Spleen (tissue), 13 donors: ENCODE measurements at regions of chr3 and their contacts with region 1.

Region 1: DNA sequence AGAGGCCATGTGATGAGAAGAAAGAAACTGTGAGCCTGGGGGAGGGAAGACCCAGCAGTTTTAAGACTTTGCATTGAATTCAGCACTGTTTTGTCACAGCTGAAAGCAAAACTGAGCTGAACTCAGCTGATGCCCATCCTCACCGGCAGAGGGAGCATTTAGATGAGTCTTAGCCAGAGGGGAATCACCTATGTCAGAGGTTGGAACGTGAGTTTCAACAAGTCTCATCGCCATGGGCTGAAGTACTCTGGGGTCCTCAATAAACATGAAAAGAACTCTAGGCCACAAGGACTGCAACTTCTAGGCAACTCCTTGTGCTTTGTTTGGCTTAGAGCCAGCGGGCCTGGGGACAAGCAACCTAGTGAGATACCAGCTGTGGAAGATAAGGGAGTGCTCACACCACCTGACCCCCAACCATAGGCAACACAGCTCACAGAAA is 324.5 kb downstream of the TBL1XR1 start:
- DNase-seq: no peak
- H3K4me3 ChIP-seq: no peak overlapping the region
- H3K27ac ChIP-seq: no peak overlapping the region
- H3K4me1 ChIP-seq: peaks cover 0 to 9% (median 6%) of the 10 kb centered on the region in 6 donors
- H3K27me3 ChIP-seq: peaks cover 0 to 2% (median 0%) of the 10 kb centered on the region in 7 donors
- CTCF ChIP-seq: peak; percentile 53 to 82 (median 73)
- POLR2A ChIP-seq: no peak

Region 2: GRCh38 chr3:176941689-176942088 is 68.9 kb after region 1 on chr3:
- intact Hi-C with region 1: loop called (anchors 5 kb)
- DNase-seq: no peak
- H3K4me3 ChIP-seq: no peak overlapping the region
- H3K27ac ChIP-seq: no peak overlapping the region
- H3K4me1 ChIP-seq: peaks cover 0 to 16% (median 0%) of the 10 kb centered on the region in 6 donors
- H3K27me3 ChIP-seq: no peaks in the 10 kb centered on the region
- CTCF ChIP-seq: no peak
- POLR2A ChIP-seq: no peak

Region 3: DNA sequence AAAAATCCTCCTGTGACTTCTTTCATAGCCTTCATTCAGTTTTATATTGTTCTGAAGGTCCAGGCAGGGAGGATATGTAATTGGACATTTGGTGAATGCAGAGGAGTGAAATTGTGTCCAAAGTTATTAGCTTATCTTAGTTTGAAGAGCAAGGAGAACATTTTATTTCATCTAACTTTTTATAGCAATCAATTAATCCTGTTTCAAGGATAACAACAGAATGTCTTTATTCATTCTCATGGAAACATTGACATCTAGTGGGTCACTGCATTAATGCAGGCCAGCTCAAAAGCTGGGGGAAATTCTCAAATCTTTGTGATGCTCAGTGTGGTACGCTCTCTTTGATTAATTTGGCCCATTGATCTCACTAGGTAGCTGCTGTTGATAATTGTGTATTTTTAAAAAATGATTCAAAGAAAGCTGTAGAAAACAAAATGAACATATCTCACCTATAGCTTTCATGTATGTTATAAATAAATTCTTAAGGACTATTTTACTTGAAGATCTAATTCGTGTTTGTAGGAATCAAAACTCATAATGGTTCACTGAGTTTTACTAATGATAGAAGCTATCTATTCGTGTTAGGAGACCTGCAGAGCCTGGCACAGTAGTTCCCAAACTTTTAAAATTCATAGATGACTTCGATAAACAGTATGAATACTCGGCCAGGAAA is 1512.6 kb after region 1 on chr3:
- intact Hi-C with region 1: loop called (anchors 5 kb)
- DNase-seq: no peak
- H3K4me3 ChIP-seq: no peak overlapping the region
- H3K27ac ChIP-seq: peak overlapping the region in 1 of 8 donors; percentile 32
- H3K4me1 ChIP-seq: peaks cover 0 to 5% (median 0%) of the 10 kb centered on the region in 6 donors
- H3K27me3 ChIP-seq: no peaks in the 10 kb centered on the region
- CTCF ChIP-seq: peak; percentile 55 to 83 (median 76)
- POLR2A ChIP-seq: no peak